ENCODE measurements at regions of chr12 and their contacts with region 1.

Region 1: DNA sequence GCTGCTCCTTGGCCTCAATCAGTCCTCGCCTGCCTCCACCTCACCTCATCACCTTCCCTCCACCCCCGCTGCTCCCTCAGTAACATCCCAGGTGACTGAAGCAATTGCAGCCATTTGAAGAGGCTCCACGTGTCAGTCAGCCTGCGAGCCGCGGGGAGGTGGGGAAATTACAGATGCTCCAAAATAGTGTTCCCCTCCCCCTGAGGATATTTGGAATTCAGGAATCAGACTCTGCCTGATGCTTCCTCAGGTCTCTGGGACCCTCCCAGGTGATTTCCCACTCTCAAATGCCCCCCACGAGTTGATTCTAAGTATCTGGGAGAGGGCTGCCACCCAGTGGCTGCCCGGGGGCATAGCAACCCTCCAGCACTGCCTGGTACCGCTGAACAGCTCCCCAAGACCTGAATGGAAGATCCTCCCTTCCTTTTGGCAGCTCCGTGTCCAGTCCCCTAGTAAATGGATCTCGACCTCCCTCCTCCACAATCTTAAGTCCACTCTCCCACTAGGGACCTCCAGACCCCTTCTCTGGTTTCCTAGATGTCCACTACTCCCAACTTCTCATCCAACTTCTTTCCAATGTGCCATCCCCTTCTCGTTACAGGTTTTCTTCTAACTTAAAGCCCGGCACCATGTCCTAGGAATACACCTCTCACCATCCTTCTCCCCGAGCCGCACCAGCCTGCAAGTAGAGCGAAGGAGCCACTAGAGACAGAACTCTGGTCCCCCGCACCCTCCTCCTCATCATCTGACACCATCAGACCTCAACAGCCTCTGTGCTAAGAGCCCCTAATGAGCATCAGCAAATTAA is 1.4 kb upstream of the ASIC1 start:
- DNase-seq: peak; percentile 72
- ATAC-seq: peak; percentile 20
- H3K4me3 Mint-ChIP-seq: peak overlapping the region; percentile 41
- H3K27ac Mint-ChIP-seq: no peak overlapping the region
- H3K4me1 Mint-ChIP-seq: peaks cover 45% of the 10 kb centered on the region
- H3K27me3 Mint-ChIP-seq: peaks cover 34% of the 10 kb centered on the region

Region 2: DNA sequence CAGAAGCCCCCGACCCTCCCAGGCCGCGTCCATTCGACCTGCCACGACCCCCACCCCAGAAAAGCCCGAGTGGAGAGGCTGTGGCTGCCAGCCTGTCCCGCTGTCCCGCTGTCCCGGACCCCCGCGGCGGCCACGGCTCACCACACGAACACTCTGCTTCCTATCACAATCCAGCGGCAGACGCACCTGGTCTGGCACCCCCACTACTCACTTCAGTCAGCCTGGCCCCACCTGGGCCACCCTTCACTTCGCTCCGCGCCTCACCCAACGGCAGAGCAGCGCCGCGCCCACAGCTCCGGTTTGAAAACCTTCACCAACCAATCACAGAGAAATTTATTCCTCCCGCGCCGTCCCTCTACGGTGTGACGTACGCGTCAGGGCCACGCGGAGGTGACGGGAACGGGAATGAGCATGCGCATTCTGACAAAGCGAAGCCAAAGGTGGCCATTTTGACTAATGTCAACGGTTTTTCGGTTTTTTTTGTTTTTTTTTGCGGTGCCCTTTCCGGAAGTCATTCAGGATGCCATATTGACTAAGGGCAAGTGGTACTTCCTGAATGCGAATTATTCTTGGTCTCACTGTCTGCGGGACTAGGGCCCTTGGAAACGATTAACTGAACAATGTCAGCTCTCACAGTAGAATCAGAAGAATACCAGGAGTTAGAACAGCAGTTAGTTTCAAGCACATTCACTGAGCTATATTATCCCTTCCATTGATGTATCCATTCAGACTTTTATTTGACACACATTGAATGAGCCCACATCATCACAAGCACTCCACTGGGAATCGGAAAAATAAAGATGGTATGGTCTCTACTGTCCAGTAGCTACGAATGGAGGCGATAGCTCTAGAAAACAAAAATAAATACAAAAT is 30.6 kb before region 1 on chr12 and contains the start of gene RACGAP1:
- CTCF ChIA-PET with region 1: interaction called, 22 read pairs
- POLR2A ChIA-PET with region 1: interaction called, 7 read pairs
- DNase-seq: peak; percentile 98
- ATAC-seq: peak; percentile 98
- H3K4me3 Mint-ChIP-seq: peak within 1 kb of the TSS; percentile 94
- H3K27ac Mint-ChIP-seq: peak within 1 kb of the TSS; percentile 98
- H3K4me1 Mint-ChIP-seq: peaks cover 39% of the 10 kb centered on the region
- H3K27me3 Mint-ChIP-seq: no peaks in the 10 kb centered on the region
- total RNA-seq, gene RACGAP1: 185 to 200 TPM

Region 3: GRCh38 chr12:50032639-50033581 is 23.1 kb before region 1 on chr12:
- CTCF ChIA-PET with region 1: interaction called, 100 read pairs
- POLR2A ChIA-PET with region 1: interaction called, 3 read pairs
- DNase-seq: no peak
- ATAC-seq: peak; percentile 35
- H3K4me3 Mint-ChIP-seq: no peak overlapping the region
- H3K27ac Mint-ChIP-seq: no peak overlapping the region
- H3K4me1 Mint-ChIP-seq: peaks cover 3% of the 10 kb centered on the region
- H3K27me3 Mint-ChIP-seq: peaks cover 22% of the 10 kb centered on the region

Region 4: DNA sequence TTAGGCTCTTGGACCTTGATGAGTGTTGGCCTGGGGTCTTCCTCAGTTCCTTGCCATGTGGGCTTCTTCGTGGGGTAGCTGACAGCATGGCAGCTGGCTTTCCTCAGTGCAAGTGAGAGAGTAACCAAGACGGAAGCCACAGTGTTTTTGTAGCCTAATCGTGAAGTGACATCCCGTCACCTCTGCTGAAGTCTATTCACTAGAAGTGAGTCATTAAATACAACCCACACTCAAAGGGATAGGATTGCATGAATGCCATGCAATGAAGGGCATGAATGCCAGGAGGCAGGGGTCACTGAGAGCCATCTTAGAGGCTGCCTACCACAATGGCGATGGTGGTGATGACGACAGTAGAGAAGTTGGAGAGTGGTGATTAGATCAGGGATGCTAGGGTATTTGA is 12.2 kb before region 1 on chr12:
- CTCF ChIA-PET with region 1: interaction called, 100 read pairs
- POLR2A ChIA-PET with region 1: interaction called, 3 read pairs
- DNase-seq: no peak
- ATAC-seq: no peak
- H3K4me3 Mint-ChIP-seq: no peak overlapping the region
- H3K27ac Mint-ChIP-seq: no peak overlapping the region
- H3K4me1 Mint-ChIP-seq: peaks cover 4% of the 10 kb centered on the region
- H3K27me3 Mint-ChIP-seq: peaks cover 8% of the 10 kb centered on the region

Region 5: DNA sequence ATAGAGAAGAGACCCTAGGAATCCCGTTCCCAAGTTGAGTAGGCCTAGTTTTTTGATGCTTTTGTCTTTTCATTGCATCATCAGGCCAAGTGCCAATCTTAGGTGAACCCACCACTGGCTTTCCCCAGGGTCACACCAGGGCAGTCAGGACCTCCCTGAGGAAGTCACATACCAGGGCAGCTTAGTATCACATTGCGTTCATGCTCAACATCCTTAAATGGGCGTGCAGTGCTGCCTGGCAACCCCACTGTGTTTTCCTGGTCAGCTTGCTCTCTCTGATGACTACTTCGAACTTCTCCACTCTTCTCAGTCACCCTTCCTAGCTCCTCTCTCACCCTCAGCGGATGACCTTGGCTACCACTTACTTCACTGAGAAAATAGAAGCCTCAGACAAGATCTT is 10.4 kb after region 1 on chr12:
- CTCF ChIA-PET with region 1: interaction called, 68 read pairs
- POLR2A ChIA-PET with region 1: interaction called, 3 read pairs
- DNase-seq: no peak
- ATAC-seq: no peak
- H3K4me3 Mint-ChIP-seq: no peak overlapping the region
- H3K27ac Mint-ChIP-seq: no peak overlapping the region
- H3K4me1 Mint-ChIP-seq: peaks cover 27% of the 10 kb centered on the region
- H3K27me3 Mint-ChIP-seq: no peaks in the 10 kb centered on the region

Region 6: GRCh38 chr12:50074936-50075807 is 19.1 kb after region 1 on chr12:
- CTCF ChIA-PET with region 1: interaction called, 68 read pairs
- POLR2A ChIA-PET with region 1: no interaction called
- DNase-seq: peak; percentile 87
- ATAC-seq: peak; percentile 95
- H3K4me3 Mint-ChIP-seq: no peak overlapping the region
- H3K27ac Mint-ChIP-seq: peak overlapping the region; percentile 60
- H3K4me1 Mint-ChIP-seq: peaks cover 12% of the 10 kb centered on the region
- H3K27me3 Mint-ChIP-seq: no peaks in the 10 kb centered on the region

Region 7: GRCh38 chr12:50084775-50085614 is 29.0 kb after region 1 on chr12 and contains the start of gene SMARCD1:
- CTCF ChIA-PET with region 1: interaction called, 5 read pairs
- POLR2A ChIA-PET with region 1: interaction called, 11 read pairs
- DNase-seq: peak; percentile 86
- ATAC-seq: peak; percentile 90
- H3K4me3 Mint-ChIP-seq: peak within 1 kb of the TSS; percentile 90
- H3K27ac Mint-ChIP-seq: peak within 1 kb of the TSS; percentile 94
- H3K4me1 Mint-ChIP-seq: peaks cover 29% of the 10 kb centered on the region
- H3K27me3 Mint-ChIP-seq: no peaks in the 10 kb centered on the region
- total RNA-seq, gene SMARCD1: 72.3 to 78.1 TPM

Region 8: GRCh38 chr12:50246873-50247612 is 191.0 kb after region 1 on chr12:
- CTCF ChIA-PET with region 1: no interaction called
- POLR2A ChIA-PET with region 1: no interaction called
- DNase-seq: peak; percentile 22
- ATAC-seq: peak; percentile 80
- H3K4me3 Mint-ChIP-seq: no peak overlapping the region
- H3K27ac Mint-ChIP-seq: peak overlapping the region; percentile 62
- H3K4me1 Mint-ChIP-seq: peaks cover 16% of the 10 kb centered on the region
- H3K27me3 Mint-ChIP-seq: no peaks in the 10 kb centered on the region